PC-9 (cell line): ENCODE measurements at regions of chr14 and their contacts with region 1.

Region 1: GRCh38 chr14:50785457-50786063 is 45.4 kb downstream of the NIN start:
- DNase-seq: no peak
- H3K4me3 ChIP-seq: no peak overlapping the region
- H3K27ac ChIP-seq: no peak overlapping the region
- H3K4me1 ChIP-seq: no peaks in the 10 kb centered on the region
- H3K27me3 ChIP-seq: no peaks in the 10 kb centered on the region
- CTCF ChIP-seq: no peak

Region 2: DNA sequence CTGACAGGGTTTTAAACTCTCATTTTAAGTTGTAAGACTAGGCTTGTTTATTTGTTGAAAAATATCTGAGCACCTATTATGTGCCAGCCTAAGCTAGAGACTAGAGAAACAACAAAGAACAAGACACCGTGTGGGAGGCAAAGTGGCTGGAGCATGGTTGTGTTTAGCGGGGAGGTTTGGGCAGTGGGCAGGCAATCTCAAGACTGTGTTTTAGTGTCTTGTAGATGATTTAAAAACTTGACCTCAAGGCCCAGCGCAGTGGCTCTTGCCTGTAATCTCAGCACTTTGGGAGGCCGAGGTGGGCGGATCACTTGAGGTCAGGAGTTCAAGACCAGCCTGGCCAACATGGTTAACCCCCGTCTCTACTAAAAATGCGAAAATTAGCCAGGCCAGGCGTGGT is 1172.9 kb before region 1 on chr14:
- CTCF ChIA-PET with region 1: no interaction called
- POLR2A ChIA-PET with region 1: interaction called, 11 read pairs
- intact Hi-C with region 1: no loop called
- DNase-seq: no peak
- H3K4me3 ChIP-seq: no peak overlapping the region
- H3K27ac ChIP-seq: no peak overlapping the region
- H3K4me1 ChIP-seq: peaks cover 7% of the 10 kb centered on the region
- H3K27me3 ChIP-seq: no peaks in the 10 kb centered on the region
- CTCF ChIP-seq: no peak